Cardiac septum (tissue), 1 donor: ENCODE measurements at regions of chr11 and their contacts with region 1.

Region 1: DNA sequence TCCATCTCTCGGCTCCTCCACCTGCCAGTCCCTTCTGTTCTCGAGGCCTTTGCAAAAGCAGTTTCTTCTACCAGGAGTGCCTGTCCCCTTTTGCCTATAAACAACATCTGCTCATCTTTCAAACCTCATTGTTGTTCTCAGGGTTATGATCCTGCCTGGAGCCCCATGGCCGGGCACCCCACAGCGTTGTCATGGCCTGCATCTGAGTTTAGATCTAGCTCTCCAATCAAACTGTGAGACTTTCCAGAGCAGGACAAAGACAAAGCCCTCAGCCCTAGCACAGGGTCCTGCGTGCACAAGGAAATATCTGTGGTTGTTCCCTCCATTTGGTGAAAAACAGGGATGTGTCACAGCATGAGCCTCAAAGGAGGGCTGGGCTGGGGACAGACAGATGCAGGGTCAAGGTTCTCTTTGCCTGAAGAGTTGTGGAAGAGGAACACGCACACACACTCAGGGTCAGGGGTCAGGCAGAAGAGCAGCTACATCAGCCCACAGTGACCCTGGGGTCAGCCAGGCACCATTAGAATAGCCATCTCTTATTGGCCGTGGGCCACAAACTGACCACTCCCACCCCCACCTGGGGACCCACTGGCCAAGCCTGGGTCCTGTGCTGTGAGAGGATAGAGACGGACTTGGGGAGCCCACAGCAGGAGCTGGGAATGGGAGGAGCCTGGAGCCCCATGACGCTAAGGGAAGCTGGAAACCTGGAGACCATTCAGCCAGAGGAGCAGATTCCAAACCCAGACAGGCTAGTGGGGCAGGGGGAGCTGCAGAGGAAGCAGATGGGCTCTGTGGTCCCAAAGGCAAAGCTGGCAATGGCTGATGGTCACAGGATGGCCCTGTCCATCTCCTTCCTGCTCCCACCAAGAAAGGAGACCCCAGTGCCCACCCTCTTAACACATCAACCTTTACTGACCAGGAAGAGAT is 99.4 kb downstream of the PDE2A start:
- DNase-seq: no peak

Region 2: GRCh38 chr11:72483412-72484186 is 91.2 kb before region 1 on chr11:
- intact Hi-C with region 1: loop called (anchors 2 kb)
- DNase-seq: no peak

Region 3: GRCh38 chr11:73053964-73054363 is 479.2 kb after region 1 on chr11:
- intact Hi-C with region 1: no loop called
- DNase-seq: no peak